Activated T-helper 2 cell treated with anti-CD3 and anti-CD28 coated beads, Interferon-gamma antibody, Interleukin-2, Interleukin-4, amounts not matched to agents 10 μg/mL and 5 μg/mL and 100 μg/mL, durations not matched to agents 14 hours and 24 hours and 36 hours (primary cell): ENCODE measurements at regions of chr11 and their contacts with region 1.

Region 1: DNA sequence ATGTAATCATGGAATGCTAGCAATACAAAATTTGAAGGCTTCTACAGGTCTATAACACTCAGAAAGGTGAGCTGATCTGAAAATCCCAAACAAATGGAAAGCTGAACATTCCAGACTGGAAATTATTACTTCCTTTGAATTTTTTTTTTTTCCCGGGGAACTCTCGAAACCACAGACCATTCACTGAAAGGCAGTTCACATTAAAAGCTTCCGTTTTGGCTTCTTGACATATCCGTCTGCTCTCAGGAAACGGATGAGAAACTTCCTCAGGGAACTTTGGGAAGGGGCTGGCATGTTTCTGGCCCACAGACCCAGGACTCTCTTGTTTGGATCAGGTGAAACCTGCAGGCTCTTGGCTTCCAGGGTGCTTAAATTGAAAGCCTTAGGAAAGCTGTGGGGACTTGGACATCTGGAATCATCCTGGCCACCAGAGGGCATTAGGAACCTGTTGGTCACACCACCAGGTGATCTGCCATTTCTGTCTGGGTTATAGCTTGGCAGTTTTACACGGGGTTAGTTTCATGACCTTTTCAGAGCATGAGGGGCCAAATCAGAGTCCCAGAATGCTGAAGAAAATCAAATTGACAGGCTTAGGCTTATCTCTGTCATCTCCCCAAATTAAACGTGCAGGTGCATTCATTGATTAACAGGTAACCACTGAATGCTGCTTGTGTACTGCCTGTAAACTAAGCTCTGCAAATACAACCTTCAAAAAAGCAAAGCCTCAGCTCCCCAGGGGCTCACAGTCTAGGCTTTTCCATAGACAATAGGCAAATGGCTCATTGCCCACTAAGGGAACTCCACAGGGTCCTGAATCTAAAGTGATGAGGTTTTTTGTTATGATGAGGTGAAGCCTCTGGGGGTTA is 22.7 kb upstream of the GRAMD1B start:
- DNase-seq: peak; percentile 30
- H3K4me3 Mint-ChIP-seq: peak overlapping the region; percentile 66
- H3K27ac Mint-ChIP-seq: peak overlapping the region; percentile 56
- H3K4me1 Mint-ChIP-seq: peaks cover 43% of the 10 kb centered on the region
- H3K27me3 Mint-ChIP-seq: no peaks in the 10 kb centered on the region

Region 2: DNA sequence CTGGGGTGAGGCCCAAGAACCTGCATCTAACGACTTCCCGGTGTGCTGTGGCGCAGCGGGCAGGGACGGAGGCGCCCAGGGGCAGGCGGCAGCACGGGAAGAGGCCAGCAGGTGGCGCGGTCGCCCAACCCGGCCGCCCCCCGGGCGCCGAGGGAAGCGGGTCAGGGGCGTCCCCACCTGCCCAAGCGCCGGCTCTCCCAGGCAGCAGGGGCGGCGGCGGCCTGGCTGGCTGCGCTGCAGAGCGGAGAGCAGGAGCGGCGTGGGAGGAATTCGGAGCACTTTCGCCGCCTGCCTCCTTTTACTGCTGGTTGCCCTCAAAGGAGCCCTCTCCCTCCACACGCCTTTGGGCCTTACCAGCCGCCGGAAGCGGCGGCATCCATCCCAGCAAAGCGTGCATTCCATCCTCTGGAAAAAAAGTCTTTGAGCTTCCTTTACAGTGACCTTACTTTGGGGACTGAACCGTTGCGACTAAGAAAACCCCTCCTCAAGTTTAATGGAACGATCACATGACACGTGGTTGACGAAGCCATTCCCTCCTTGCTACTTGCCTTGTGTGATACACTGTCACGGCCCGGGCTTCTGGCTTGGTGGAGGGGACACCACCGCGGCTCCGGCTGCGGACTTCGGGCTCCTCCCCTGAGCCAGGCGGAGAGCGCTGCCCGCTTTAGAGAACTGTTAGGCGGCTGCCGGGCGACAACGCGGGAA is 105.5 kb before region 1 on chr11:
- intact Hi-C with region 1: loop called (anchors 1 kb)
- DNase-seq: peak; percentile 67
- H3K4me3 Mint-ChIP-seq: peak overlapping the region; percentile 58
- H3K27ac Mint-ChIP-seq: peak overlapping the region; percentile 84
- H3K4me1 Mint-ChIP-seq: peaks cover 45% of the 10 kb centered on the region
- H3K27me3 Mint-ChIP-seq: peaks cover 2% of the 10 kb centered on the region

Region 3: GRCh38 chr11:123478352-123478987 is 71.1 kb after region 1 on chr11:
- intact Hi-C with region 1: loop called (anchors 1 kb)
- DNase-seq: no peak
- H3K4me3 Mint-ChIP-seq: no peak overlapping the region
- H3K27ac Mint-ChIP-seq: peak overlapping the region; percentile 60
- H3K4me1 Mint-ChIP-seq: peaks cover 51% of the 10 kb centered on the region
- H3K27me3 Mint-ChIP-seq: no peaks in the 10 kb centered on the region

Region 4: GRCh38 chr11:123559523-123559955 is 152.2 kb after region 1 on chr11:
- intact Hi-C with region 1: loop called (anchors 10 kb)
- DNase-seq: no peak
- H3K4me3 Mint-ChIP-seq: no peak overlapping the region
- H3K27ac Mint-ChIP-seq: no peak overlapping the region
- H3K4me1 Mint-ChIP-seq: peaks cover 31% of the 10 kb centered on the region
- H3K27me3 Mint-ChIP-seq: no peaks in the 10 kb centered on the region